Gastrocnemius medialis (tissue), 4 donors: ENCODE measurements at regions of chr1 and their contacts with region 1.

Region 1: GRCh38 chr1:212070720-212071302 is 35.3 kb downstream of the DTL start:
- DNase-seq: no peak
- ATAC-seq: peak; percentile 51 to 64
- H3K4me3 ChIP-seq: no peak overlapping the region
- H3K27ac ChIP-seq: peak overlapping the region in 3 of 4 donors; percentile 9 to 40 (median 17)
- H3K4me1 ChIP-seq: peaks cover 10 to 22% of the 10 kb centered on the region in 2 donors
- H3K27me3 ChIP-seq: no peaks in the 10 kb centered on the region
- CTCF ChIP-seq: peak; percentile 72 to 96 (median 84)
- POLR2A ChIP-seq: no peak

Region 2: DNA sequence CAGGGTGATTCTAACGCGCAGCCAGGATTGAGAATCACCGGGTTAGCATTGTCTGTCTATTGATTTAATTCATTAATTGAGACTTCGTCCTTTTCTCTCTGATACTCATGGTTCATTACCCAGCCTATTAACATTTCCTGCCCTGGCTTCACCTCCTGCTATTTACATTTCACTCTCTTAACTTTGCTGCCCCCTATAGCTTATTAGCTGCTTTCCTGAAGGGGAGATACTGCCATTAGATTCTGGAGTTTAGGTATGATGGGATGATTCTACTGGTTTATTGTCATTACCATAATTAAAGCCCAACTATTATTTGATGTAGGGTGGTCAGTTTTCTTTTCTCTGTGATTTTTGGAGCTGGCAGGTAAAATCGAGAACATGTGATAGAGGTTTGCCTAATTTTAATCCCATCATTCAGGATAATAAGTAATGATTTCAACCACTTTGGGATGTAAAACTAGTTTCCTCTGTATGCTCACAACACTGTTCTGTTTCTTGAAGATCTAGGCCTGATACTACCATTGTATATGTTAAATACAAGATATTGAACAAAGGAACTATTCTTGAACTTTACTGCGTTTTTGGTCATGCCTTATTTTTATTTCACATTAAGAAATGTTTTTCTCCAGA is 220.8 kb after region 1 on chr1:
- in situ Hi-C with region 1: loop called in 2 of 4 experiments (anchors 5 kb)
- intact Hi-C with region 1: loop called (anchors 1 kb)
- DNase-seq: no peak
- ATAC-seq: peak; percentile 57 to 66
- H3K4me3 ChIP-seq: no peak overlapping the region
- H3K27ac ChIP-seq: peak overlapping the region; percentile 10 to 98 (median 28)
- H3K4me1 ChIP-seq: peaks cover 85 to 89% of the 10 kb centered on the region in 2 donors
- H3K27me3 ChIP-seq: no peaks in the 10 kb centered on the region
- CTCF ChIP-seq: peak; percentile 39 to 73 (median 57)
- POLR2A ChIP-seq: no peak

Region 3: GRCh38 chr1:212315907-212316306 is 245.1 kb after region 1 on chr1:
- in situ Hi-C with region 1: no loop called
- intact Hi-C with region 1: loop called (anchors 2 kb)
- DNase-seq: no peak
- ATAC-seq: peak in 1 of 2 donors; percentile 78
- H3K4me3 ChIP-seq: no peak overlapping the region
- H3K27ac ChIP-seq: peak overlapping the region in 1 of 4 donors; percentile 40
- H3K4me1 ChIP-seq: peaks cover 22 to 41% of the 10 kb centered on the region in 2 donors
- H3K27me3 ChIP-seq: no peaks in the 10 kb centered on the region
- CTCF ChIP-seq: peak in 2 of 5 experiments; percentile 16 to 36
- POLR2A ChIP-seq: no peak

Region 4: GRCh38 chr1:212368073-212368484 is 297.3 kb after region 1 on chr1:
- in situ Hi-C with region 1: loop called in 3 of 4 experiments (anchors 5 to 25 kb)
- intact Hi-C with region 1: loop called (anchors 1 kb)
- DNase-seq: peak in 1 of 2 donors; percentile 52
- ATAC-seq: peak; percentile 91 to 94
- H3K4me3 ChIP-seq: no peak overlapping the region
- H3K27ac ChIP-seq: no peak overlapping the region
- H3K4me1 ChIP-seq: peaks cover 7 to 8% of the 10 kb centered on the region in 2 donors
- H3K27me3 ChIP-seq: no peaks in the 10 kb centered on the region
- CTCF ChIP-seq: peak; percentile 72 to 91 (median 77)
- POLR2A ChIP-seq: no peak